ENCODE measurements at regions of chr9 and their contacts with region 1.

Region 1: DNA sequence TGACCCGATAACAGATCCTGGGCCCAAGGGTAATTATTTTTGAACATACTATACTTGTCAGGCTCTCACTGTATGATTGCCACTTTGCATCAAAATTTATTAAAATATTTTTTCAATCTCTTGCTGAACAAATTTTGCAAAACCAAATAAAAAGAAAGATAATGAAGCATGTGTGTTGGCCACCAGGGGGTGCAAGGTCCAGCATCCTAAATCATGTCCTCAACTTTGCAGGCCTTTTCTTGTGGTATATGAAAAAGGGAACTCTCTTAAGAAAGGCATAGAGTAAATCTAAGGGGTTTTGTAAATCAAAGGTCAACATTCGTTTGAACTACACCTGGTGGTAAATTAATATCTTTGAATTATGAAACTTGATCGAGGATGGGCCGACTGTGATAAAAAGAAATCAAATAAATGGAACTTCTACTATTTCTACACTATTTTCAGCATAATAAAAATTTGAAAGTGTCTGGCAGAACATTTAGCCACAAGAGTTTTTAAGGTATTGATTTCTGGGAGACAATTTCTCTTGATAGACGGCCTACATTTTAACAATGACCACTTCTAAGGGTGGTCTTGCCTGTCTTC is 676.5 kb downstream of the DMRTA1 start:
- DNase-seq: no peak
- ATAC-seq: no peak
- H3K4me3 ChIP-seq: no peak overlapping the region
- H3K27ac ChIP-seq: no peak overlapping the region
- H3K4me1 ChIP-seq: no peaks in the 10 kb centered on the region
- H3K27me3 ChIP-seq: no peaks in the 10 kb centered on the region
- CTCF ChIP-seq: peak in 8 of 9 donors; percentile 27 to 68 (median 58)

Region 2: DNA sequence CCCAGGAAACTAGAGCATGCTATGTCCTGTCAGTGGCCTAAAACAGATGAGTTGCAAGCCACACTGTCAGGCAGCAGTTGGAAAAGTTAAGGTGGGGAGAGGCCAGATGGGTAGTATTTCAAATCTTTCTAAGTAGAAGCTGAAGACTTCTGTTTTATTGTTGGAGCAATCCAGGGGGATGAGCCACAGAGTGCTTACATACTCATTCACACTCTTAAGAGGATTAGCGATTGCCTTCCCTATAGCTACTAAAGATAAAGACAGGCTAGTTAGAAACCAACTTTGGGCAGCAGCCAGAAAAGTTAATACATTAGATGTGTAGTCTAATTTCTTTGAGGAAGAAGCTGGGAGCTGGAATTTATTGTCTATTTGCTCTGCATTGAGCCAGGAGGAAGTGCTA is 764.6 kb after region 1 on chr9:
- intact Hi-C with region 1: loop called in 1 of 10 experiments (anchors 10 kb)
- DNase-seq: no peak
- ATAC-seq: no peak
- H3K4me3 ChIP-seq: no peak overlapping the region
- H3K27ac ChIP-seq: no peak overlapping the region
- H3K4me1 ChIP-seq: no peaks in the 10 kb centered on the region
- H3K27me3 ChIP-seq: peaks cover 0 to 10% (median 0%) of the 10 kb centered on the region in 7 donors
- CTCF ChIP-seq: no peak